ENCODE measurements at regions of chr7 and their contacts with region 1.

Region 1: DNA sequence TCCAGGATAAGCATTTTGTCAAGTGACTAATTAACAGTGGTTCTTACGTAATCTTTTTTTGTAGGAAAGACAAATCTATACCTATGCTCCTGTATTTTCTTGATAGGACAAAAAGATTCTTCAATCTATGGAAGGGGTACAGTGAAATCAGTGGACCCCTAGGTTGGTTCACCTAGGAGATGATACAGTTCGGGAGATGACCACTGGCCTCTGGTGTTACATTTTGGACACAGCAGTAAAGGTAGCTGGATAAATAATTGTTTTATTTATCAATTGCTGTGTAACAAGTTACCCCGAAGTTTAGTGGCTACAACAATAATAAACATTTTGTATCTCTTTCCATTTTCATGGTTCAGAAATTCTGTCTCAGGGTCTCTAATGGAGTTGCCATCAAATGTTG is 288.2 kb upstream of the MAGI2 start:
- DNase-seq: no peak
- ATAC-seq: no peak

Region 2: DNA sequence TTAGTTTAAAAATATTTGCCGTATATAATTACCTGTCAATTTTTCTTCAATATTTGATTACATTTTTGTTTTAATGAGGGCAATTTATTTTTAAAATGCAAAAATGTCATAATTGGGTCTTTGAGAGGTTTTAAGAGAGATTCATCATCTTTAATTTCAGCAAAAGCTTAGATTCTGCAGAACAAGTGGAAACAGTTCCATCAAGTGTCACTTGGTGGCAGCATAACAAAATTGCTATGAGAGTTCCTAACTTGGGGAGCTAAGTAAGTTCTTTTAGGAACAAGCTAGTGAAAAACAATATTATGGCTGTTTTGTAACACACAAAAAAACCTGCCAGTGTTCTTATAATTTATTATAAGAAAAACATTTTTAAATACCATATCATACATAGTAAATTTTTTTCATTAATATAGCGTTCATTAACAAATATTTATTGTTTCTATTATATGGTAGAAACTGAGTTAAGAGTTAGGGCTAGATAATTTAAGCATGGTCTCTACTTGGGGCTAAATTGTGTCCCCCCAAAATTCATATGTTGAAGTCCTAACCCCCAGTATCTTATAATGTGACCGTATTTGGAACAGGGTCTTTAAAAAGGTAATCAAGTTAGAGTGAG is 443.4 kb before region 1 on chr7:
- intact Hi-C with region 1: loop called (anchors 5 kb)
- DNase-seq: no peak
- ATAC-seq: no peak

Region 3: DNA sequence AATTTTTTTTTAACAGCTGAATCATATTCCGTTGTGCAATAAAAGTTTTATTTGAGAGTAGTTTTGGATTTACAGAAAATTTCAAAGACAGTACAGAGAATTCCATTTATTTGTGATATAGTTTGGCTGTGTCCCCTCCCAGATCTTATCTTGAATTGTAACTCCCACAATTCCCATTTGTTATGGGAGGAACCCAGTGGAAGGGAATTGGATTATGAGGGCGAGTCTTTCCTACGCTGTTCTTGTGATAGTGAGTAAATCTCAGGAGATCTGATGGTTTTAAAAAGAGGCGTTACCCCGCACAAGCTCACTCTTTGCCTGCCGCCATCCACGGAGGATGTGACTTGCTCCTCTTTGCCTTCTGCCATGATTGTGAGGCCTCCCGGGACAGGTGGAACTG is 60.2 kb before region 1 on chr7:
- intact Hi-C with region 1: no loop called
- DNase-seq: no peak
- ATAC-seq: no peak